ENCODE measurements at regions of chr3 and their contacts with region 1.

Region 1: DNA sequence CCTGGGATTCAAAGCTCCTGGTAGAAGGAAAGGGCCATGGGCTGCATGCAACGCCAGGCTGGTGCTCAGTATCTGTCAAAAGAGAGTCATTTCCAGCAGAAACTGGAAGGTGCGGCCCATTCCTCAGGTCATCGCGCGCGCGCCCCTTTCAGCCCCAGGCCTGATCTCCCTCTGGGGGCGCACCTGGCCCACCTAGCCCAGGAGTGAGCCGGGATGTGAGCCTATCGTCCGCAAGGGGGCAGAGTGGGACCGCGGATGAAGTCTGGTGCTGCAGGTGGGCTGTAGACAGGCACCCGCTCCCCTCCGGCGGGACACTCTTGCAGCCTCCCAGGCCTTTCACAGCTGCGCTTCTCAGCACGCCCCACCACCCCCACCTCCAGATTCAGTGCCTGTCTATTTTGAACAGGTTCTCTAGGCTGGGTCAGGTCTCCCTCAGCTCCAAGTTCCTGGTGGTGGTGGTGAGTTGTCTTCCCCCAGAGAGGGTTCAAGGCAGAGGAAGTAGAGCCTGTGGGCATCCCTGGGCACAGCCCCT is 5.8 kb upstream of the RPL29 start:
- DNase-seq: peak; percentile 40 to 73
- ATAC-seq: peak; percentile 55 to 78
- H3K4me3 ChIP-seq: no peak overlapping the region
- H3K27ac ChIP-seq: no peak overlapping the region
- H3K4me1 ChIP-seq: peaks cover 21 to 29% of the 10 kb centered on the region in 2 donors
- H3K27me3 ChIP-seq: no peaks in the 10 kb centered on the region
- CTCF ChIP-seq: peak; percentile 86 to 98 (median 97)
- POLR2A ChIP-seq: no peak

Region 2: DNA sequence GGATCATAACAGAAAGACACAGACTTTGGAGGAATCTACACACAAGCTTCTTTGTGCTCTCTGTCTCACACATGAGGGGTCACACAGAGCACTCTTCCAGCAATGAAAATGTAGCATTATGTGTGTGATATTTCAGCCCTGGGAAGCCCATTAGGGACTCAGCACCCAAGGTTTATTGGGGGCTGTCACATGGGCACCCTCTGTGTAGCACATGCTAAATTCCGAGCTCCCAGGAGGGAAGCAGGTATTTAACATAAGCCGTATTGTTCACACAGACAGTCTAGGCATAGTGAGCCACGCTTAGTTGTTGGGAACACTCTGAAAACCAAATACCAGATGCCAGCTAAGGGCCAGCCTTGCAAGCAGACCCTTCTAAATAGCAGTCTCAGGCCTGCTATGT is 878.0 kb before region 1 on chr3:
- in situ Hi-C with region 1: no loop called
- intact Hi-C with region 1: no loop called
- DNase-seq: no peak
- ATAC-seq: no peak
- H3K4me3 ChIP-seq: no peak overlapping the region
- H3K27ac ChIP-seq: no peak overlapping the region
- H3K4me1 ChIP-seq: no peaks in the 10 kb centered on the region
- H3K27me3 ChIP-seq: no peaks in the 10 kb centered on the region
- CTCF ChIP-seq: no peak
- POLR2A ChIP-seq: no peak

Region 3: GRCh38 chr3:52084916-52085680 is 83.6 kb after region 1 on chr3:
- in situ Hi-C with region 1: no loop called
- intact Hi-C with region 1: no loop called
- DNase-seq: no peak
- ATAC-seq: no peak
- H3K4me3 ChIP-seq: no peak overlapping the region
- H3K27ac ChIP-seq: no peak overlapping the region
- H3K4me1 ChIP-seq: peaks cover 5 to 9% of the 10 kb centered on the region in 2 donors
- H3K27me3 ChIP-seq: no peaks in the 10 kb centered on the region
- CTCF ChIP-seq: no peak
- POLR2A ChIP-seq: no peak

Region 4: DNA sequence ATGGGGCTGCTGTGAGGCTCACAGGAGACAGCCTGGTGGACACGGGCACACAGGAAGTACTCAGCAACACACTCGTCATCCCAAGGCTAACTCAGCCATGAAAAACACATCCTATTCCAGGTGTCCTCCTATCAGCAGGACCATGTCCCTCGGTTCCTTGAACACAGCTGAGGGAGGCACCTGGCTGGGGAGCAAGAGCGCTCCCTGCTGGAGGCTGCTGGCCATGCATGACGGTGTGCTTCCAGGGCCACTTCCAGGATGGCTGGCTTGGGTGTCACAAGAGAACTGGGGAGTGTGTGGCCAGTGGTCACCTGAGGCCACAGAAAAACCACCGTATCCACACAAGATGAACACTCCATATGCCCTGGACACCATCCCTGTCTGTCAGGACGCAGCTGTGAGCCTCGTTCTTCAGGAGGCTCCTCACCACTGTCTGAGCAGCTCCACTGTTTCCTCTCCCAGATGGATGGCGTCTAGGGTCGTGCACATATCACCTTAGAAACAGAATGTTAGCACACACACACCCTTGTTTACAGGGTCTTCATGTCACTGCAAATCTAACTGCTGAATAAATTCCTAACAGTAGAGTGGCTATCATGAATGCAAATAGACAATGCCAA is 121.7 kb after region 1 on chr3:
- in situ Hi-C with region 1: no loop called
- intact Hi-C with region 1: loop called (anchors 1 kb)
- DNase-seq: peak; percentile 33 to 60
- ATAC-seq: peak; percentile 74 to 89
- H3K4me3 ChIP-seq: no peak overlapping the region
- H3K27ac ChIP-seq: peak overlapping the region in 3 of 4 donors; percentile 54 to 68 (median 67)
- H3K4me1 ChIP-seq: peaks cover 4 to 20% of the 10 kb centered on the region in 2 donors
- H3K27me3 ChIP-seq: no peaks in the 10 kb centered on the region
- CTCF ChIP-seq: peak; percentile 88 to 95 (median 93)
- POLR2A ChIP-seq: no peak

Region 5: GRCh38 chr3:52144034-52144795 is 142.7 kb after region 1 on chr3:
- in situ Hi-C with region 1: loop called (anchors 5 kb)
- intact Hi-C with region 1: loop called (anchors 1 kb)
- DNase-seq: peak; percentile 78 to 85
- ATAC-seq: peak; percentile 59 to 60
- H3K4me3 ChIP-seq: no peak overlapping the region
- H3K27ac ChIP-seq: no peak overlapping the region
- H3K4me1 ChIP-seq: peaks cover 22 to 23% of the 10 kb centered on the region in 2 donors
- H3K27me3 ChIP-seq: no peaks in the 10 kb centered on the region
- CTCF ChIP-seq: peak; percentile 96 to 99 (median 98)
- POLR2A ChIP-seq: no peak

Region 6: GRCh38 chr3:52372822-52373504 is 371.5 kb after region 1 on chr3:
- in situ Hi-C with region 1: no loop called
- intact Hi-C with region 1: no loop called
- DNase-seq: no peak
- ATAC-seq: no peak
- H3K4me3 ChIP-seq: no peak overlapping the region
- H3K27ac ChIP-seq: no peak overlapping the region
- H3K4me1 ChIP-seq: no peaks in the 10 kb centered on the region
- H3K27me3 ChIP-seq: no peaks in the 10 kb centered on the region
- CTCF ChIP-seq: no peak
- POLR2A ChIP-seq: no peak

Region 7: GRCh38 chr3:52529376-52530333 is 528.1 kb after region 1 on chr3:
- in situ Hi-C with region 1: no loop called
- intact Hi-C with region 1: no loop called
- DNase-seq: peak in 1 of 2 donors; percentile 26
- ATAC-seq: peak in 1 of 2 donors; percentile 37
- H3K4me3 ChIP-seq: no peak overlapping the region
- H3K27ac ChIP-seq: peak overlapping the region; percentile 57 to 77 (median 66)
- H3K4me1 ChIP-seq: peaks cover 40 to 43% of the 10 kb centered on the region in 2 donors
- H3K27me3 ChIP-seq: no peaks in the 10 kb centered on the region
- CTCF ChIP-seq: no peak
- POLR2A ChIP-seq: peak in 1 of 2 donors; percentile 42